ENCODE measurements at regions of chr2 and their contacts with region 1.

Region 1: DNA sequence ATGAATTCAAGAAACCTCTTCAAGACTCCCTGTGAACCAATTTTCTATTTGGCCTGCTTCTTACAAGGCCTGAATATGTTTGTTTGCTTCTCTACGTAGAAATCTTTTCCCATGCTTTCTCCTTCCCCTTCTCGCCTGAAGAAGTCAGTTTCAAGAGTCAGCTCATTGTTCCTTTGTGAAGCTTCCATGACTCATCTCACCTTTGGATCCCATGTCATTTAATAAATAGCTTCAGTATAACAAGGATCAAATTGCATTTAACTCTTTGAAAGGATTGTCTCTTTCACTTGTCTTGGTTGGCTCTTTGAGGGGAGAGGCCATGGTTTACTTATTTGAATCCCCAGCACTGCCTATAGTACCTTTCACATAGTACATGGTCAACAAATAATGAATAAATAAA is 28.4 kb downstream of the CPS1 start:
- DNase-seq: no peak

Region 2: DNA sequence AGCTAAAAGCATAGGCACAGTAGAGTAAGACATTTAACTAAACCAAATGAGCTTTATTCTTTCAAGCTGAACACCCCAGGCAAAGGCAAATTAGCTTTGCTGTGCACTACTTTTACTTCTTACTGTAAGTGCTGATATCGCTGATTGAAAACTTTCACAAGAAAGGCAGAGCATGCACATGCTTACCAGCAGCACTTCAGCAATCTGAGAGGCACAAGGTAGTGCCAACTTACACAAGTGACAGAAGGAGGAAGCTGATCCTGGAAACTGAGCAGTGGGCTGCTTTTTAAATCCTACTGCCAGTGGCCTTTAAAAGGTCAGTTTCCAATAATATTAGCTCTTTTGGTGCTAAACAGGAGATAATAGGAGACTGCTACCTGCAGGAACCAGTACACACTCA is 152.2 kb before region 1 on chr2:
- intact Hi-C with region 1: no loop called
- DNase-seq: no peak

Region 3: GRCh38 chr2:210445116-210445707 is 139.6 kb before region 1 on chr2:
- intact Hi-C with region 1: loop called (anchors 10 kb)
- DNase-seq: no peak

Region 4: DNA sequence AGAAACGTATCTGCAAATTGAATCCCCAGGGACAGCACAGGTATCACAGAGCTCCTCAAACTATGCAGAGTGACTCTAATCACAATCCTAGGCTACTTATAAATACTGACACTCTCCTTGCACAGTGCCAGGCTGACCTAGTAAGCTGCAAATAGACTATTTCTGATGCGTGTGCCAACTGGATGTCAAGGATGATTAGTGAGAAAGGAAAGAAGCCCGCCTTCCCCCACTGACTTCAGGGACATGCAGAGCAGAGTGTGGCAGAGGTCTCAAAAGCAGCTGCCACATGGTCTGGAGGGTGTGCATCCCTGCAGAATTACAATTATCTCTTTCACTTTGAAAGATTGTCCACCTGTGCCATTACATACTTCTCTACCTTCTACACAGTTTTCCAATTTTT is 207.2 kb after region 1 on chr2:
- intact Hi-C with region 1: no loop called
- DNase-seq: no peak